ENCODE measurements at regions of chr5 and their contacts with region 1.

Region 1: GRCh38 chr5:61625681-61626621 is 293.9 kb downstream of the ZSWIM6 start:
- DNase-seq: peak; percentile 88 to 91
- ATAC-seq: peak; percentile 91
- H3K4me3 ChIP-seq: peak overlapping the region; percentile 52 to 53
- H3K27ac ChIP-seq: peak overlapping the region in 1 of 2 donors; percentile 14
- H3K4me1 ChIP-seq: no peaks in the 10 kb centered on the region
- H3K27me3 ChIP-seq: no peaks in the 10 kb centered on the region

Region 2: DNA sequence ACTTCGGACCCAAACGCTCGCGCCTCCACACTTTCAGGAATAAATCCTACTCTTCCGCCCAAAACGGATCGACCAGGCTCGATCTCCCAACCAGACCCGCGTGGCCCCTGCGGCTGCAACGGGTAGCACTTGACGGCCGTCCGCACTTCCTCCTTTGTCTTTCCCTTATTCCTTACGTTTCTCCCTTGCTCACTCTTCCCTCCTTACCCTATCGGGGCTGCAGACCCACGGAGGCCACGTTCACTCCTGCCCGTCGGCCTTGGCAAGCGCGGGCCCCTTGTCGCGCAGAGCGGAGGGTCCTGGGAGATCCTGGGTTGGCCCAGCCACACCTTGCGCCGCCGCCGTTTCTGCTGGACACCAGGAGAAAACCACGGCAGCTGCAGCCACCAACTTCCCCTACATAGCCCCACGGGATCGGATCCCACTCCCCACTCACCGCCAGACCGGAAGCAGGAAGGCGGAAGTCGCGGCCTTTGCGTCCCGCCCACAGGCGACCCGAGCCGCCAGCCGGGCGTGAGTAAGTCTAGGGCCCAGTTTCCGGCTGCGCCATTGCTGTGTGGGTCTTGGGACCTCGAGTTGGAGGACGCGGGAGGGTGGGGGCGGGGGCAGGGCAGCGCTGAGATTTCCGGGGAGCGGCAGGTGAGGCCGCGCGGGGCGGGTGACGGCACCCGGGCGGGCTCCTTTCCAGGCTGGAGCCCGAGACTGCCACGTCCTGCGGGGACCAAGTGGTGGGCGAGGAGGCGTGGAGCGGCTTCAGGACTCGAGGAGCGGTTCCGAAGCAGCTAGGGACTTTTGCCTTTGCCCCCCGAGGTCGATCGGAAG is 463.7 kb before region 1 on chr5 and contains the start of gene SMIM15:
- intact Hi-C with region 1: loop called in 1 of 2 experiments (anchors 10 kb)
- DNase-seq: peak; percentile 94 to 95
- ATAC-seq: peak; percentile 97
- H3K4me3 ChIP-seq: peak within 1 kb of the TSS; percentile 49 to 67
- H3K27ac ChIP-seq: peak within 1 kb of the TSS in 1 of 2 donors; percentile 52
- H3K4me1 ChIP-seq: peaks cover 3 to 6% of the 10 kb centered on the region in 2 donors
- H3K27me3 ChIP-seq: no peaks in the 10 kb centered on the region
- total RNA-seq, gene SMIM15: 33.3 to 41.1 TPM

Measured in aorta (tissue), 5 donors.